H1 (cell line): ENCODE measurements at regions of chr7 and their contacts with region 1.

Region 1: GRCh38 chr7:100563809-100564400 is 9.8 kb downstream of the SAP25 start:
- DNase-seq: peak; percentile 65 to 98
- H3K4me3 ChIP-seq: no peak overlapping the region
- H3K27ac ChIP-seq: no peak overlapping the region
- H3K4me1 ChIP-seq: peaks cover 0 to 18% (median 8%) of the 10 kb centered on the region in 4 experiments; a peak in 6 of 7 replicates
- H3K27me3 ChIP-seq: no peaks in the 10 kb centered on the region
- CTCF ChIP-seq: peak in 2 of 3 experiments; percentile 82 to 96; a peak in 3 of 4 replicates
- EP300 ChIP-seq: no peak
- POLR2A ChIP-seq: no peak
- RAD21 ChIP-seq: peak; percentile 74 to 76

Region 2: GRCh38 chr7:100257017-100257416 is 306.9 kb before region 1 on chr7:
- CTCF ChIA-PET with region 1: no interaction called
- POLR2A ChIA-PET with region 1: no interaction called
- DNase-seq: no peak
- H3K4me3 ChIP-seq: no peak overlapping the region
- H3K27ac ChIP-seq: no peak overlapping the region
- H3K4me1 ChIP-seq: no peaks in the 10 kb centered on the region
- H3K27me3 ChIP-seq: no peaks in the 10 kb centered on the region
- CTCF ChIP-seq: no peak
- EP300 ChIP-seq: no peak
- POLR2A ChIP-seq: no peak
- RAD21 ChIP-seq: no peak

Region 3: DNA sequence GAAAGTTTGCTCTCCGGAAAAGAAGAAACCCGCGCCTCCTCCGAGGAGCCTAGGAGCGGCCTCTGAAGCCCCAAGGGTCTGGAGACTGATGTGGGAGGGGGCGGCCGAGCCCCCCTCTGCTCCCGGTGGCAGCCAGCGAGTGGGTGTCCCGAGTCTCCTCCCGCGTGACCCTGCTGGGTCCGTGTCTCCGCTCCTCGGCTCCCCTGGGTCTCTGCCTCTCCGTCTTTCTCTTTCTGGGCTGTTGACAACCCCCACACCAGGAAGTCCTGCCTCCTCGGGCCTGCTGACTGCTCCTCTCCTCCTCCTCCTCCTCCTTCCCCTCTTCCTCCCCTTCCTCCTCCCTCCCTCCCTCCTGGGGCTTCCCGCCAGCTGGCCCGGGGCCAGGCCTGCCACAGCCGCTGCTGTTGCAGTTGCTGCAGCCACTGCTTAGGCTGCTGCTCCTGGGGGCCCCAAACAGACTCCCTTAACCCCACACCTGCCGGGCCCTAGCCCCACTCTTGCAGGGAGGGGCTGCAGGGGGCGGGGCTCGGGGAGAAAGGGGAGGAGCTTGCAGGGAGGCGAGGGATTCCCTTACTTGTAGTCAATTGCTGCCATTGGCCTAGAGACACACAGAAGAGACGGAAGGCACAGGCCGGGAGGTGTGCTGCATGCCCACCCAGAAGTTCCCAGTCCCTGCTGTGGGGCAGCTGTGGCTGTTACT is 84.8 kb before region 1 on chr7 and contains the start of gene TSC22D4:
- CTCF ChIA-PET with region 1: interaction called, 149 read pairs
- POLR2A ChIA-PET with region 1: interaction called, 3 read pairs
- DNase-seq: peak; percentile 90 to 96
- H3K4me3 ChIP-seq: peak within 1 kb of the TSS; percentile 78 to 86 (median 81)
- H3K27ac ChIP-seq: no peak within 1 kb of the TSS
- H3K4me1 ChIP-seq: peaks cover 0 to 12% (median 6%) of the 10 kb centered on the region in 4 experiments; a peak in 5 of 7 replicates
- H3K27me3 ChIP-seq: no peaks in the 10 kb centered on the region
- CTCF ChIP-seq: peak in 1 of 3 experiments; percentile 7; a peak in 1 of 4 replicates
- EP300 ChIP-seq: no peak; a peak in 1 of 3 replicates
- POLR2A ChIP-seq: no peak; a peak in 1 of 3 replicates
- RAD21 ChIP-seq: peak in 1 of 2 experiments; percentile 15; a peak in 1 of 4 replicates
- total RNA-seq, gene TSC22D4: 20.3 and 24.1 TPM in 2 replicates

Region 4: DNA sequence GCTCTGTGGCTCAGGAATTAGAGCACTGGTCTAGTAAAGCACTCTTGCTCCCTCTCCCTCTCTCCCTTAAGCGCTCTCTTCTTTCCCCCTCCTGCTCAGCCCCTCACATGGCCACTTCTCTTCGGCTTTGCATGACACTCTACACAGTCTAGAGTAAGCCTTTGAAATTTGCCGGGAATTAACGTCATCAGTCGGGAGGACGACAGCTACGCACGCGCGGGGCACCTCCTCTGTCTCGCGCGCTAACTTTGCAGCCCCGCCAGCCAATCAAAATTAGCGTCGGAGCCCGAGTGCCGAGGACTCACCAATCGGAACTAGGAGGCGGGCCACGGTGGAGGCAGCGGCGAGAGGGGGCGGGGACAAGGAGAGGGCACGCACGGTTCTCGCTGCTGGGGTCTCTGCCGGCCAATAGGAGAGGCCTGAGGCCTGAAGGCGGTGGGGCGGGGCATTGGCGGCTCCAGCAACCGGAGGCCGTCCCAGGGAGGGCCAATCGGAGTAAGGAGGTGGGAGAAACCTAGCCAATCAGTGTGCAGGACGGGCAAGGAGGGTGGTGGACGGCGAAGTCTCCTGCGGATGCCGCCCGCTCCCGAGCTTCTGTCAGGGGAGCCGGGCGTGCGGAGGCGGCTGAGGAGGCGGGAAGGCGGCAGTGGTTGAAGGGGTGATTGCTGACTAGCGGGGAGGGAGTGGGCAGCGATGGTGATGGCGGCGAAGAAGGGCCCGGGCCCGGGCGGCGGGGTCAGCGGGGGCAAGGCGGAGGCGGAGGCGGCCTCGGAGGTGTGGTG is 25.1 kb before region 1 on chr7 and contains the start of gene AGFG2:
- CTCF ChIA-PET with region 1: interaction called, 341 read pairs
- POLR2A ChIA-PET with region 1: interaction called, 12 read pairs
- DNase-seq: peak; percentile 99
- H3K4me3 ChIP-seq: peak within 1 kb of the TSS; percentile 70 to 83 (median 77)
- H3K27ac ChIP-seq: no peak within 1 kb of the TSS
- H3K4me1 ChIP-seq: peaks cover 4 to 24% (median 13%) of the 10 kb centered on the region in 4 experiments; a peak in 4 of 7 replicates
- H3K27me3 ChIP-seq: peaks cover 0 to 3% (median 2%) of the 10 kb centered on the region in 4 experiments; a peak in 3 of 7 replicates
- CTCF ChIP-seq: no peak
- EP300 ChIP-seq: no peak
- POLR2A ChIP-seq: peak in 1 of 2 experiments; percentile 33; a peak in 1 of 3 replicates
- RAD21 ChIP-seq: peak in 1 of 2 experiments; percentile 8; a peak in 1 of 4 replicates
- total RNA-seq, gene AGFG2: 7.6 TPM in 2 replicates

Region 5: DNA sequence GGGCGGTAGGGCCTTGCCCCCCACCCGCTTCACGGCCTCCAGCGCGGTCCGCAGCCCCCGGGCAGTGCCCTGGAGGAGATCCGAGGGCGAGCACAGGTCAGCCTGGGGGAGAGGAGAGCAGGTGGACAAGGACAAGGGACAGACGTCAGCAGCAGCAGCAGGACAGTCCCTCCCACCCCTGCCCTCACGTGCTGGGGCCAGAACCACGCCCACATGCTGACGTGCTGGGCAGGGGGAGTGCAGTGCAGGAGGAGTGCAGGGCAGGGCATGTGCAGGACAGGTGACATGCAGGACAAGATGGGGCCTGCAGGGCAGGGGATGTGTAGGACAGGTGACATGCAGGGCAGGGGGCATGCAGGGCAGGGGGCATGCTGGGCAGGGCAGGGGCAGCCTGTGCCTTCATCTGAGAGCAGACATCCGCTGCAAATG is 11.3 kb after region 1 on chr7:
- CTCF ChIA-PET with region 1: interaction called, 14 read pairs
- POLR2A ChIA-PET with region 1: interaction called, 6 read pairs
- DNase-seq: no peak
- H3K4me3 ChIP-seq: no peak overlapping the region
- H3K27ac ChIP-seq: no peak overlapping the region
- H3K4me1 ChIP-seq: peaks cover 0 to 26% (median 20%) of the 10 kb centered on the region in 4 experiments; a peak in 6 of 7 replicates
- H3K27me3 ChIP-seq: peaks cover 0 to 4% (median under 1%) of the 10 kb centered on the region in 4 experiments; a peak in 1 of 7 replicates
- CTCF ChIP-seq: no peak
- EP300 ChIP-seq: no peak
- POLR2A ChIP-seq: no peak
- RAD21 ChIP-seq: no peak

Region 6: GRCh38 chr7:100611974-100612729 is 48.2 kb after region 1 on chr7 and contains the start of gene MOSPD3:
- CTCF ChIA-PET with region 1: interaction called, 11 read pairs
- POLR2A ChIA-PET with region 1: interaction called, 3 read pairs
- DNase-seq: peak; percentile 98 to 99
- H3K4me3 ChIP-seq: peak within 1 kb of the TSS; percentile 74 to 83 (median 76)
- H3K27ac ChIP-seq: peak within 1 kb of the TSS; percentile 98
- H3K4me1 ChIP-seq: peaks cover 0 to 6% (median 2%) of the 10 kb centered on the region in 4 experiments; a peak in 3 of 7 replicates
- H3K27me3 ChIP-seq: no peaks in the 10 kb centered on the region; a peak in 1 of 7 replicates
- CTCF ChIP-seq: no peak
- EP300 ChIP-seq: no peak
- POLR2A ChIP-seq: peak in 1 of 2 experiments; percentile 93; a peak in 2 of 3 replicates
- RAD21 ChIP-seq: no peak
- total RNA-seq, gene MOSPD3: 19.3 and 20.7 TPM in 2 replicates

Region 7: GRCh38 chr7:100719523-100720319 is 155.8 kb after region 1 on chr7:
- CTCF ChIA-PET with region 1: interaction called, 11 read pairs
- POLR2A ChIA-PET with region 1: no interaction called
- DNase-seq: no peak
- H3K4me3 ChIP-seq: peak overlapping the region; percentile 32 to 71 (median 50)
- H3K27ac ChIP-seq: no peak overlapping the region
- H3K4me1 ChIP-seq: peaks cover 0 to 5% (median 2%) of the 10 kb centered on the region in 4 experiments; a peak in 5 of 7 replicates
- H3K27me3 ChIP-seq: peaks cover 7 to 26% (median 26%) of the 10 kb centered on the region in 4 experiments
- CTCF ChIP-seq: peak; percentile 9 to 29 (median 22)
- EP300 ChIP-seq: no peak
- POLR2A ChIP-seq: no peak
- RAD21 ChIP-seq: peak; percentile 47 to 53